Right ventricle myocardium inferior (tissue), 1 donor: ENCODE measurements at regions of chr5 and their contacts with region 1.

Region 1: DNA sequence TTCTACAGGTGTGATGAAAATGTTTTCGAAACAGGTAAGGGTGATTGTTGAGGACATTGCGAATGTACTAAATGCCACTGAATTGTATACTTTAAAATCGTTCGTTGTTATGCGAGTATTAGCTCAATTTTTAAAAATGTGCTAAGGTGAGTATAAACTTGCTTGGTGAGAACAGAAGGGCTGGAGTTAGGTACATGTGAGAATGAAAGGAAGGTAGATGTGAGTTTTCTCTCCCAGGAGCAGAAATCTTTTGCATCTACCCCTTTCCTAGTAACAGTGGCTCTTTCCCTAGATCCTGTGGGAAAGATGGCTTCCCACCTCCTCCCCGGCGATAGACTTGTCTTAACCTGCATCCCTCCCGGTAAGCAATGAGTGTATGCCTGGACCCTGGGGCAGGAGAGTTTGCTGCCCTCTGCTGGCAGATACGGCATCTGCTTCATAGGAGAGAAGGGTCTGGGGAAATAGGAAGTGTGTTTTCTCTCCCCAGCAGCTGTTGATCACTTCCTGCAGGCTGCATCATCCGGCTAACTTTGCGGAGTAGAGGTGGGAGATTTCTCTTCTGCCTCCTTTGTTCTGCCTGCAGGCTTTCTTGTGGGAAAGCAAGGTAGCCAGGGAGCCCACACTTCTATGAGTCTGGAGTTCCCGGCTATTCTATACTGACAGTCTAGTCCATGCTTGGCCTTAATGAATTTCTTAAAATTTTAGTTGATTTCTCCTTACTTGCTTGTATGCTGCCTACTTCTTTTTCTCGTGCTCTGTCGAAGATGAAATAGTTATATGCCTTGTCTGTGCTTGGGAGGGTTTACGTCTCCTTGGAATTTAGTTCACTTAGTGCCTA is 373.3 kb upstream of the SEMA6A start:
- DNase-seq: peak; percentile 67
- ATAC-seq: peak; percentile 63

Region 2: DNA sequence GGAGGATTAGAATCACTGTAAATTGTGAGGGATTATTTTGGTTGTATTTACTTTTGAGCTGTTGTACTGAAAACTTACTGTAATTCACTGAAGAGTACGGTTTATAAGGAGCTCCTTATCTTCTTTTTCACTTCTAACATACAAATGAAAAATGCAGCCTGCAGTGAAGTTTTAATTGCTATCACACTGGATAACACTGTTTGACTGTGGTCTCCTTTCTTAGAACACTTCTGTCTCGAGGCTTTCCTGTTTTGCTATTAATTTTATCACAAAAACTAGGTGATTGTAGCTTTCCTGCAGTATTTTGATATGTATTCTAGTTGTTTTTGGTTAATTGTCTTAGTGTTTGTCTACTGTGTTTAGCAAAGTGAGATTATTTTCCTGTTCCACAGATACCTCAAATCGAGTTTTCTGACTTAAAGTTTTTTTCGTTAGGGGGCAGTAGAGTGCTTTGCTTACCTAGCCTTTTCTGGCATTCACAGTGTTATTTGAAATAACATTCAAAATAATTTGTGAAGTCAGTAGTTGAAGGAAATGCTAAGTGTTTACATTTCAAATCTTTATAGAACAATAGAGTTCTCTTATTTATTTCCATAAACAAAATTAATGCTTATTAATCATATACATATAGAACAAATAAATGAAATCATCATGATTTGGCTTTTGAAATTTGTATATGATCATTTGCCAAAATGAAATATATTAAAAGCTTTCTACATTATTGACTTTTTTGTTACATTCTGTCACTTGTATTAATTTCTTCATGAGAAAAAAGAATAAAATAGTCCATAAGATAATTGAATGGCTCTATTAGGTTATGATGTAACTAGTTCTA is 810.1 kb before region 1 on chr5:
- intact Hi-C with region 1: loop called (anchors 10 kb)
- DNase-seq: no peak
- ATAC-seq: no peak

Region 3: DNA sequence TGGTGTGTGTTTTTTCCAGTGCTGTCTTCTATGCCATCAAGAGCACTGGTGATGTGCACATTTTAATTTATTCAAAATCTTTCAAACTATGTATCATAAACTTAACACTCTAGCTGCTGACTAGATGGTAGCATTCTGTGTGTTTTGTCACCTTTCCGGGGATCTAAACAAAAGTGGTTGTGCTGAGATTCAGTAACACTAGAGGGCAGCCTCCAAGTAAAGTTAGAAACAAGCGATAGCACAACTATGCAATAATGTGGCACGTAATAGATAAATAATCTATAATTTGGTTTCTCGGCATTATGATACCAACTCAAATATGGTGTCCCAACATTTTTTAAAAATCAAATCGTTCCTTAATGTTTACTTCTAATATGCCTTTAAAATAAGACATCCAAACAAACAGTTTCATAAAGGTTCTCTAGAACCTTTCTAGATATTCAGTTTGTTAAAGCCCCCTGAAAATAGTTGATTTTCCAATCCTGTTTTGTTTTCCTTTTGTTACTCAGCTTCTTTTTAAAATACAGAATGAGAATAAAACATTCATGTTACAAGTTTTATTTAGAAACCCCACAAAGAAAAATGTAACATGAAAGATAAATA is 390.1 kb before region 1 on chr5:
- intact Hi-C with region 1: loop called (anchors 5 kb)
- DNase-seq: no peak
- ATAC-seq: no peak

Region 4: DNA sequence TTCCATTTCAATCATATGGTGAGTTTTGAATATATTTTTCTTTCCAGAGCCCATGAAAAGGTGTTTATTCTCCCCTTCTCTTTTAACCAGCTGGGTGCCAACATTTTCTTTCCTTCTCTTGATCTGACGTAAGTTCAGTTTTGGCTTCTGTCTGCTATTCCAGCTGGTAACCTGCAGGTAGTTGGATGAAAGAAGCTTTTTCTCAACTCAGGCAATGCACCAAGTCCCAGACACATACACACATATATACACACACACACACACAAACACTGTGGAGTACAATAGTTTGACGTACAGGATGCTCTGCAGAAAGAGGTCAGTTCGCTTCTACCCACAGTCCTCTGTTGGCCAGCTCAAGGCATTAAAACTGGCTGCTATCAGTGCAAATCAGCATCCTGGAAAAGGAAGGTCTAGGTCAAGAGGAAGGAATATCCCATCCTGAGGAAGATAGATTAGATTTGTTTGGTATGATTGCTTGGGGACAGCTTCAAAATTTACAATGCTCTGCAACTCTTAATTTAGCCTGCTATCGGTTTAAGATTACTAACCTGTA is 159.0 kb before region 1 on chr5:
- intact Hi-C with region 1: loop called (anchors 5 kb)
- DNase-seq: no peak
- ATAC-seq: peak; percentile 64